ENCODE measurements at regions of chr2 and their contacts with region 1.

Region 1: GRCh38 chr2:189142893-189143759 is 36.4 kb downstream of the COL5A2 start:
- DNase-seq: peak; percentile 75 to 80
- H3K4me3 ChIP-seq: no peak overlapping the region
- H3K4me3 Mint-ChIP-seq: no peak overlapping the region
- H3K27ac Mint-ChIP-seq: peak overlapping the region; percentile 17
- H3K4me1 ChIP-seq: peaks cover 12% of the 10 kb centered on the region
- H3K4me1 Mint-ChIP-seq: peaks cover 20% of the 10 kb centered on the region
- H3K27me3 ChIP-seq: no peaks in the 10 kb centered on the region
- H3K27me3 Mint-ChIP-seq: no peaks in the 10 kb centered on the region
- CTCF ChIP-seq: peak; percentile 93 to 99

Region 2: DNA sequence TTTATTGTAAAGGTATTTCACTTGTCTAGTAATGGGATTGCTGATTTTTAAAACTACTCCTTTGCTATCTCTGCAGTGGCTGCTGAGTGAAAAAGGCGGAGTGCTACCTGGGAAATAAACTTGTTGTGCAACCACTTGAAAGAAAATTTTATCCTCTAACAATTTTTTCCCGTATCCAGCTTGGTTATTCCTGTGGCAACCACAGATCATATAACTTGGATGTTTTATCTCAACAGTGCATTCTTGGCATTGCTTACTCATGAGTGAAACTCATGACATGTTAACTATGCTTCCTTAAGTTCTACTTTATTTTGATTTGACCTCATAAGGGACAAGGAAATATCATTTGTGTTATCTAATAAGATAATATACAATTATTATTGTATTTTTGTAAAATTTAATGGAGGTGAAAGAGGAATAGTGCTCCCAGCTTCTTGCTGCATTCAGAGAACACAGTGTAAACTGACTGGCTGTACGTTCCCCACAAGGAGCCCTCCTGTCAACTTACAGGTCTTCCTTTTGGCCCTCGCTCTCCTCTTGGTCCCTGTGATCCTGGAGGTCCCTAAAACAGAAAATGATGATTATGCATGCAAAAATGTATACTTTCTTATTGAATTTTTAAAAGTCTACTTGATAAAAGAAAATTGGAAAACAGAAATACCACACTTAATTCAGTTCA is 46.2 kb before region 1 on chr2:
- CTCF ChIA-PET with region 1: interaction called, 3 read pairs
- POLR2A ChIA-PET with region 1: no interaction called
- intact Hi-C with region 1: loop called (anchors 1 kb)
- DNase-seq: peak in 1 of 2 experiments; percentile 52
- H3K4me3 ChIP-seq: no peak overlapping the region
- H3K4me3 Mint-ChIP-seq: no peak overlapping the region
- H3K27ac Mint-ChIP-seq: peak overlapping the region; percentile 70
- H3K4me1 ChIP-seq: peaks cover 19% of the 10 kb centered on the region
- H3K4me1 Mint-ChIP-seq: peaks cover 21% of the 10 kb centered on the region
- H3K27me3 ChIP-seq: no peaks in the 10 kb centered on the region
- H3K27me3 Mint-ChIP-seq: no peaks in the 10 kb centered on the region
- CTCF ChIP-seq: no peak

Region 3: GRCh38 chr2:189129971-189130370 is 13.2 kb before region 1 on chr2:
- CTCF ChIA-PET with region 1: interaction called, 10 read pairs
- POLR2A ChIA-PET with region 1: no interaction called
- intact Hi-C with region 1: no loop called
- DNase-seq: no peak
- H3K4me3 ChIP-seq: no peak overlapping the region
- H3K4me3 Mint-ChIP-seq: no peak overlapping the region
- H3K27ac Mint-ChIP-seq: no peak overlapping the region
- H3K4me1 ChIP-seq: no peaks in the 10 kb centered on the region
- H3K4me1 Mint-ChIP-seq: no peaks in the 10 kb centered on the region
- H3K27me3 ChIP-seq: no peaks in the 10 kb centered on the region
- H3K27me3 Mint-ChIP-seq: no peaks in the 10 kb centered on the region
- CTCF ChIP-seq: no peak

Region 4: DNA sequence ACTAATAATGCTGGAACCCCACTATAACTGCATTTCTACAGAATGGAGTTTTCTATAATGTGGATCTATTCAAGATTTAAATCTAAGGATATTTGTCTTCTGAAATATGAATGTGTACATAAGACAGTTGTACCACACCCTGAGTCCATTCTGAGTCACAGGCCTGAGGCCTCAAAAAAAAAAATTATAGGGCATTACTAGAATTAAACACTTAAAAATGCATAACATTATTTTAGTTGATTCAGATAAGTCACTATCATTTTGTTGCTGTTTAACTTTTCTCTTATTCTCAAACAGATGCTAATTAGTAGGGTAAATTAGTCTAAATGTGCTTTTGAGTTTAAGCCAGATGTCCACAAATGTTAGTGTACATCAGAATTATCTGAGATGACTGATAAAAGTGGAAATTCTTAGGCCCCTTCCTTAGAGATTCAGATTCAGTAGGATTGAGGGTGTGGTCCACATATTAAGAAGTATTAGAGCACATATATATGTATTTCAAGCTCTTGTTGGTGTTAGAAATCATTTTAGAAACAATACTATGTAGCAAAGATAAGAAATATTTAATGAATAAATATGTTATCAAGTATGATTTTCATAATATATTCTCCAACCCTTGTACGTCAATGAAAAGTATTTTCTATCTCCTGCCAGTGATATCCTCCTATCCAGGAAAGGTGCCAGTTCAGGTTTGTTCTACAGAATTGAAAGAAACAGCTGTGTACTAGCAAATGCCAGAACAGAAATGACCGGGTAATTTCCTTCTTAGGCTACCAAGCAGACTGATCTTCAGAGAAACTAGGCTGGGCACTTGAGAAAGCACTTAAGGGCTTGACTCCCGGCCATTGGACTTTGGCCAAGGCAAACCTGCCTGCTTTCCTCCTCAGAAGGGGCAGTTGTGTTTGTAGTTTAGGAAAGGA is 79.0 kb after region 1 on chr2:
- CTCF ChIA-PET with region 1: no interaction called
- POLR2A ChIA-PET with region 1: no interaction called
- intact Hi-C with region 1: loop called (anchors 1 kb)
- DNase-seq: peak; percentile 18 to 43
- H3K4me3 ChIP-seq: no peak overlapping the region
- H3K4me3 Mint-ChIP-seq: no peak overlapping the region
- H3K27ac Mint-ChIP-seq: no peak overlapping the region
- H3K4me1 ChIP-seq: peaks cover 15% of the 10 kb centered on the region
- H3K4me1 Mint-ChIP-seq: peaks cover 22% of the 10 kb centered on the region
- H3K27me3 ChIP-seq: no peaks in the 10 kb centered on the region
- H3K27me3 Mint-ChIP-seq: no peaks in the 10 kb centered on the region
- CTCF ChIP-seq: no peak

Measured in Caco-2 (cell line).